Sigmoid colon (tissue), 7 donors: ENCODE measurements at regions of chr10 and their contacts with region 1.

Region 1: DNA sequence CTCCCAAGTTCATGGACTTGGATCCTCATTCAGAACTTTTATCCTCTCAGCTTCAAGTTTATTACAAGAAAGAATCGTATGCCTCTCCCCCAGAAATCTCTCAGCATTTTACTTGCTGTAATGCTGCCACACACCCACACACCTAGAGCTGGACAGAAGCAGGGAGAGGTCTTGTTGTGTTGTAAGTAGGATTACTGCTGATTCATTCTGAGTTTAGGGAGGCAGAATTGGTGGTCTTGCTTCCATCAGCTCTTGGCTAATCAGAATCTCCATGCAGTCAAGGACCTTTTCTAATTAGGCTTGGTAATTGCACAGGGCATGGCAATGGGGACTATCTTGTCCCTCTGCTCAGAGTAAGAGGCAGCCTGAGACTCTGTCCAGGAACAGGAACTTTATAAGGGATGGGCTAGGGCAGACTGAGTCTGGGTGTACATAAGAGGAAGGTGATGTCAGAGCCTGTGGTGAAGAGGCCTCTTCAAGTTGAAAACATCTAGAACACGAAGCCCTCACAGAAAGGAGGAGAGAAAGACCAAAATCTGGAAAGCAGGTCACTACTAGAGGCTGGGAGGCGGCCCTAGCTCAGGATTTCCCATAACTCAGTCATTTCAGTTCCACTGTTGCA is 7.0 kb upstream of the PTPRE start:
- DNase-seq: no peak
- H3K4me3 ChIP-seq: no peak overlapping the region
- H3K27ac ChIP-seq: no peak overlapping the region
- H3K4me1 ChIP-seq: no peaks in the 10 kb centered on the region
- H3K27me3 ChIP-seq: no peaks in the 10 kb centered on the region
- CTCF ChIP-seq: no peak
- EP300 ChIP-seq: no peak
- POLR2A ChIP-seq: no peak

Region 2: GRCh38 chr10:127781412-127781811 is 118.5 kb before region 1 on chr10:
- intact Hi-C with region 1: no loop called
- DNase-seq: no peak
- H3K4me3 ChIP-seq: no peak overlapping the region
- H3K27ac ChIP-seq: no peak overlapping the region
- H3K4me1 ChIP-seq: no peaks in the 10 kb centered on the region
- H3K27me3 ChIP-seq: no peaks in the 10 kb centered on the region
- CTCF ChIP-seq: no peak
- EP300 ChIP-seq: no peak
- POLR2A ChIP-seq: no peak

Region 3: GRCh38 chr10:127925471-127926207 is 25.8 kb after region 1 on chr10:
- intact Hi-C with region 1: loop called (anchors 2 kb)
- DNase-seq: no peak
- H3K4me3 ChIP-seq: no peak overlapping the region
- H3K27ac ChIP-seq: peak overlapping the region in 2 of 4 donors; percentile 6 to 17
- H3K4me1 ChIP-seq: peaks cover 0 to 32% (median 17%) of the 10 kb centered on the region in 4 donors
- H3K27me3 ChIP-seq: no peaks in the 10 kb centered on the region
- CTCF ChIP-seq: no peak
- EP300 ChIP-seq: no peak
- POLR2A ChIP-seq: no peak